ENCODE measurements at regions of chr12 and their contacts with region 1.

Region 1: DNA sequence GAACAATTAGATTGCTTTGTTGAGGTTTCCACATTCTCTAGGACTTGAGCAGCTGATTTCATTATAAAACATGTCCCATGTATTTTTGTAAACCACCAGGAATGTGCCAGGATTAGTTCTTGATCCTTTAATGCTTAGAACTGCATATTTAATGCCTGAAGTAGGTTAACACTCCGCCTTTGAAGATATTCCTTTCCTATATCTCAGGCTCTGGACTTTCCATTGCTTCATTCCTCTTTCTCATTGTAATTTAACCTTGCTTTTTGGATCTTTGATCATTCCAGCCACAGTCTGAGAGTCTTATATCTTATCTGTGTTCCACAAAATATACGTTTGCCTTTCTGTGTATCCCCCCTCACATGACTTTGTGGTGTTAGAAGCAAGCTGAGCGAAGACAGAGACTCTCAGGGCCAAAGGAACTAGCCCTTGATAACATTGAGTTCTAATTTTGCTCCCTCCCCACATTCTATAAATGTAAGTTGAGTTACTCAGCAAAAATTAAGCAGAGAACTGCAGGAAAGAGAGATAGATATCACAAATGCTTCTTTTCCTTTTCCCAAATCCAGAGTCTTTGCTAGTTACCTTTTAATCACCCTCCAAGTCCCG is 2.4 kb upstream of the CLEC1B start:
- DNase-seq: no peak
- H3K4me3 ChIP-seq: no peak overlapping the region
- H3K27ac ChIP-seq: no peak overlapping the region
- H3K4me1 ChIP-seq: no peaks in the 10 kb centered on the region
- CTCF ChIP-seq: no peak

Region 2: GRCh38 chr12:9588749-9589148 is 412.5 kb before region 1 on chr12:
- CTCF ChIA-PET with region 1: no interaction called
- POLR2A ChIA-PET with region 1: interaction called, 10 read pairs
- intact Hi-C with region 1: no loop called
- DNase-seq: no peak
- H3K4me3 ChIP-seq: no peak overlapping the region
- H3K27ac ChIP-seq: no peak overlapping the region
- H3K4me1 ChIP-seq: no peaks in the 10 kb centered on the region
- CTCF ChIP-seq: no peak

Region 3: DNA sequence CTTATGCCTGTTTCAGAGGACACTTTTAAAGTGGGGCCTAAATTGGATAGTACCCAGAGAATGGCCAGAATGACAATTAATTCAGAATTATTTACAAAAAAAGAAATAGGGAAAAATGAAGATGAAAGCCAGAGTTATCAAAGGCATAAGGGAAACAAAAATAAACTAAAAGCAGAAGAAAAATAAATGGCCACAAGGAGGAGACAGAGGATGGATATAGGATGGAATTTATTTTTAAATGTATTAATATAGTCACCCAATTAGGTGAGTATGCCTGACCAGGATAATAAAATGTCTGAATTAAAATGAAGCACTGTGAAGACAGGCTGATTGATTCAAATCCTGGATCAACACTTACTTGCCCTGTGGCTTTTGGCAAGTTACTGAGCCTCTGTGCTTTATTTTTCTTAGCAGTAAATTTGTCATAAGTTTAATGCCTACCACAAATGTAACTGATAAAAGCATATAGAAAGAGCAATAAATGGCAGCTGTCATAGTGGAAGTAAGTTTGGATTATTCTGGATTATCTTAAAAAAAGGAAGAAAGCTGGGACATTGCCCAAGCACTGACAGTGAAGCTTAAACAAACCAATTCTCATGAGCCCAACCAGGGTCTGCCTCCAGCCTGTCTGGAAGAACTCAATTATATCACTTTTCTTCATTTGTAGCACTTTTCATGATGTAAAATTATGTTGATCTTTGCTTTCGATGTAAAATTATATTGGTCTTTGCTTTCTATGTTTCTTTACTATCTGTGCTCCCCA is 32.7 kb after region 1 on chr12:
- CTCF ChIA-PET with region 1: no interaction called
- POLR2A ChIA-PET with region 1: no interaction called
- intact Hi-C with region 1: loop called (anchors 2 kb)
- DNase-seq: peak; percentile 9
- H3K4me3 ChIP-seq: no peak overlapping the region
- H3K27ac ChIP-seq: no peak overlapping the region
- H3K4me1 ChIP-seq: no peaks in the 10 kb centered on the region
- CTCF ChIP-seq: peak; percentile 81

Region 4: GRCh38 chr12:10167588-10167987 is 166.3 kb after region 1 on chr12:
- CTCF ChIA-PET with region 1: no interaction called
- POLR2A ChIA-PET with region 1: no interaction called
- intact Hi-C with region 1: no loop called
- DNase-seq: no peak
- H3K4me3 ChIP-seq: no peak overlapping the region
- H3K27ac ChIP-seq: no peak overlapping the region
- H3K4me1 ChIP-seq: peaks cover 11% of the 10 kb centered on the region
- CTCF ChIP-seq: no peak